ENCODE measurements at regions of chr2 and their contacts with region 1.

Region 1: DNA sequence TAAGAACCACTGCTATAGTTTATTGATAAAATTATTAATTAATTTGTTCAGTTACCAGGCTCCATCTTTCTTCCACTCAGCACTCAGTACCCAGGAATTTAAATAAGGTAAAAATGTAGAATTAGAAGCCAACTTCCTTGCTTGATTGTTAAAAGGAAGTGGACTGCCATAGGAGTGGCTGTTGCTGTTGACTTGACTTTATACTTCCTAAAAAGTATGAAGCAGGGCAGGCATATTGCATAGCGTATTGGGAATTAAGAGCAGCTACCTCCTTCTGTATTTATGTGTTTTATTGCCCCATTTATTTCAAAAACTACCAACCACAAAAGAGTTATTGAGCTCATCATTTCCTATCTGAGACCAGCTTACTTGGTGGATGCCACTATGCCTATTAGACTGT is 27.9 kb downstream of the PSMD1 start:
- DNase-seq: no peak
- ATAC-seq: no peak
- H3K4me3 ChIP-seq: no peak overlapping the region
- H3K27ac ChIP-seq: no peak overlapping the region
- H3K4me1 ChIP-seq: no peaks in the 10 kb centered on the region
- H3K27me3 ChIP-seq: no peaks in the 10 kb centered on the region
- CTCF ChIP-seq: no peak

Region 2: GRCh38 chr2:231037731-231038482 is 46.7 kb before region 1 on chr2:
- intact Hi-C with region 1: no loop called
- DNase-seq: no peak
- ATAC-seq: peak in 2 of 4 donors; percentile 27 to 50
- H3K4me3 ChIP-seq: peak overlapping the region; percentile 32
- H3K27ac ChIP-seq: no peak overlapping the region
- H3K4me1 ChIP-seq: no peaks in the 10 kb centered on the region
- H3K27me3 ChIP-seq: peaks cover 0 to 58% (median 22%) of the 10 kb centered on the region in 3 donors
- CTCF ChIP-seq: no peak

Region 3: DNA sequence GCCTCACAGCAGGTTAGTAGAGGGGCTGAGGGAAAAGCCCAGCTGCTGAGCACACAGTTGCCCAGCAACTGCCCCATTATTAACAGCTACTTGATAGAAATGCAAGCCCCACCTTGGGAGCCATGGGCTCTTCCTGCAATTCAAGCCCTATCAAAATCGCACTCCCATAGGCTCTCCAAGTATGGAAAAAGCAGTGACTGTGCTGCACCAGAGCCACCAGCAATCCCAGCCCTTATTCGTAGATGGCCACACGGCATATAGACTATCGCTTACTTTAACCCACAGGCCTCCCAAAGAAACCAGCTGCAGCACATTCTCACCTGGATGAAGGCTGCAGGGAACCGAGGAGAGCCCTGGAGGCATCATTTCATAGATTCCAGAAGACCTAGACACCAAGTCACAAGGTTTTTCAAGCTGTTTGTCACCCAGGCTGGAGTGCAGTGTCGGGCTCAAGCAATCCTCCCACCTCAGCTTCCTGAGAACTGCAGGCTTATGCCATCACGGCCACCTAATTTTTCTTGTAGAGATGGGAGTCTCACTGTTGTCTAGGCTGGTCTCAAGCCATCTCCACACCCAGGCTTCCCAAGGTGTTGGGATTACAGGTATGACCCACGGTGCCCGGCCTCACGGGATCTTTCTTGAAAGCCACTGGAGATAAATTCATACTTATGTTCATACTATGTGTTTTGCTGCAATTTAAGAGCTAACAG is 368.4 kb after region 1 on chr2:
- intact Hi-C with region 1: loop called in 1 of 2 experiments (anchors 10 kb)
- DNase-seq: no peak
- ATAC-seq: peak; percentile 12 to 28 (median 16)
- H3K4me3 ChIP-seq: no peak overlapping the region
- H3K27ac ChIP-seq: no peak overlapping the region
- H3K4me1 ChIP-seq: no peaks in the 10 kb centered on the region
- H3K27me3 ChIP-seq: no peaks in the 10 kb centered on the region
- CTCF ChIP-seq: no peak

Region 4: GRCh38 chr2:231557571-231558237 is 473.1 kb after region 1 on chr2:
- intact Hi-C with region 1: no loop called
- DNase-seq: peak; percentile 36 to 86
- ATAC-seq: peak; percentile 92 to 98 (median 96)
- H3K4me3 ChIP-seq: no peak overlapping the region
- H3K27ac ChIP-seq: peak overlapping the region; percentile 36
- H3K4me1 ChIP-seq: peaks cover 3% of the 10 kb centered on the region
- H3K27me3 ChIP-seq: no peaks in the 10 kb centered on the region
- CTCF ChIP-seq: peak; percentile 74

Measured in psoas muscle (tissue), 8 donors.